Heart left ventricle (tissue), 16 donors: ENCODE measurements at regions of chr2 and their contacts with region 1.

Region 1: GRCh38 chr2:190468814-190469569 is 60.8 kb downstream of the MFSD6 start:
- DNase-seq: peak; percentile 72 to 87 (median 82)
- ATAC-seq: peak; percentile 82 to 90 (median 86)
- H3K4me3 ChIP-seq: peak overlapping the region in 5 of 12 donors; percentile 7 to 27 (median 7)
- H3K27ac ChIP-seq: peak overlapping the region; percentile 69 to 91 (median 82)
- H3K4me1 ChIP-seq: peaks cover 17 to 59% (median 40%) of the 10 kb centered on the region in 12 donors
- H3K27me3 ChIP-seq: no peaks in the 10 kb centered on the region
- CTCF ChIP-seq: no peak
- POLR2A ChIP-seq: no peak

Region 2: GRCh38 chr2:190415794-190416775 is 52.9 kb before region 1 on chr2:
- intact Hi-C with region 1: loop called in 1 of 10 experiments (anchors 10 kb)
- DNase-seq: no peak
- ATAC-seq: no peak
- H3K4me3 ChIP-seq: no peak overlapping the region
- H3K27ac ChIP-seq: peak overlapping the region in 10 of 12 donors; percentile 0 to 59 (median 26)
- H3K4me1 ChIP-seq: peaks cover 0 to 39% (median 12%) of the 10 kb centered on the region in 12 donors
- H3K27me3 ChIP-seq: no peaks in the 10 kb centered on the region
- CTCF ChIP-seq: no peak
- POLR2A ChIP-seq: no peak

Region 3: DNA sequence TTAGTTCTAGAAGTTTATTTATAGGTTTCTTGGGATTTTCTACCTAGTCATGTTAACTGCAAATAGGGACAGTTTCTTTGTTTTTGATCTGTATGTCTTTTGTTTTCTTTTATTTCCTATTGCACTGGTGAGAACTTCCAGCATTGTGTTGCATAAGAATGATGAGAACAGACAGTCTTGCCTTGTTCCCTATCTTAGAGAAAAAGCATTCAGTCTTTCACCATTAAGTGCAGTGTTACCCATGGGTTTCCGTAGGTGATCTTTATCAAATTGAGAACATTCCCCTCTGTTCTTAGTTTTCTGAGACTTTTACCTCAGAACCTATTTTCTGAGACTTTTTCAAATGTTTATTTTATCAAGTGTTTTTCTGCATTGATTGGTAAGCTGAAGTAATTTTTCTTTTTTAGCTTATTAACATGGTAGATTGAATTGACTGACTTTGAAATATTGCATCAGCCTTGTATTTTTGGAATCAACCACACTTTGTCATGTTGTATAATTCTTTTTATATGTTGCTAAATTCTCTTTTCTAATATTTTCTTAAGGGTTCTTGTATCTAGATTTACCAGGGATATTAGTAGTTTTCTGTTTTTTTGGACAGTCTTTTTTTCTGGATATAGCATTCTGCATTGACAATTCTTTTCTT is 43.6 kb before region 1 on chr2:
- intact Hi-C with region 1: loop called in 2 of 10 experiments (anchors 5 kb)
- DNase-seq: no peak
- ATAC-seq: no peak
- H3K4me3 ChIP-seq: no peak overlapping the region
- H3K27ac ChIP-seq: no peak overlapping the region
- H3K4me1 ChIP-seq: peaks cover 0 to 13% (median 0%) of the 10 kb centered on the region in 12 donors
- H3K27me3 ChIP-seq: no peaks in the 10 kb centered on the region
- CTCF ChIP-seq: no peak
- POLR2A ChIP-seq: no peak

Region 4: DNA sequence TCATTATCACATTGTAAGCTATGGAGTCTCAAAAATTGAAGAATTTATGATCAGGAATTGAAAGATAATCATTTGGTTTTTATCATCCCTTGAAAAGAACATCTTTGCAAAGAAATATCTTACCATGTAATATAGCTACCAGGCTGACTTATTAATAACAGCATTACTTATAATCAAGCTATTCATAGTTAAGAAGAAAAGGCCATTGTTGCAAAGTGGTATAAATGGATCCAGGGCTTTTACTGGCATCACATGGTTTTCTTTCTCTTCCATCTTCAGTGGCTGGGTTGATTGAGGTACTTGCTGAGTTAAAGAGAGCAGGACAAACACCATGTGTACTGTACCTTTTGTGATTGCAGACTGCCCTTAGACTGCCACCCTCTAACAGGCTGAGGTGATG is 21.2 kb before region 1 on chr2:
- intact Hi-C with region 1: loop called in 1 of 10 experiments (anchors 2 kb)
- DNase-seq: no peak
- ATAC-seq: no peak
- H3K4me3 ChIP-seq: no peak overlapping the region
- H3K27ac ChIP-seq: no peak overlapping the region
- H3K4me1 ChIP-seq: peaks cover 0 to 50% (median 29%) of the 10 kb centered on the region in 12 donors
- H3K27me3 ChIP-seq: no peaks in the 10 kb centered on the region
- CTCF ChIP-seq: no peak
- POLR2A ChIP-seq: no peak